ENCODE measurements at regions of chr1 and their contacts with region 1.

Region 1: GRCh38 chr1:154324669-154325582 is at the start of gene ATP8B2:
- DNase-seq: peak; percentile 90
- CTCF ChIP-seq: peak; percentile 82

Region 2: DNA sequence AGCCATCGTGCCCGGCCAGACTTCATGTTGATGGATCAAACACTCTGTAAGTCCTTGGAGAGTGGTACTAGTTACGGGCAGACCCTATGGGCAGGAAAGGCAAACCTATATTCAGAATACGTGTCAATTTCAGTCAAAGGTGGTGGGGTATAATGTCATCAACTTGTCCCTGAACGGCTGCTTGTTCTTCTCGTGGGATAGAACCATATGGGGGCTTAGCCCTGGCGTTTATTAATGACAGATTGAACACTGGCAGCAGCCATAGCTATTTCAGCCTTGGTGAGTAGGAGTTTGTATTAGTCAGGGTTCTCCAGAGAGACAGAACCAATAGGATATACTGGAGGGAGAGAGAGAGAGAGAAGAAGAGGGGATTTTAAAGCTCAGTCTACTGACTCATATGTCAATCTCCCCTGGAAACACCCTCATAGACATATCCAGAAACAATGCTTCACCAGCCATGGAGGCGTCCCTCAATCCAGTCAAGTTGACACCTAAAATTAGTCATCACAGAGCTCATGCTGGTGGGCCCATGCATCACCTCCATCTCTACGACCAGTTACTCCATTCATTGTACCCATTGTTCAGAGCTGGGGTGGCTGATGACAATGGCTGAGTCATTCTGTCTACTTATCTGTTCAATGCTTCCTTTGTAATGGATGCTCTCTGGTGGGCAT is 20.1 kb before region 1 on chr1:
- CTCF ChIA-PET with region 1: interaction called, 16 read pairs
- POLR2A ChIA-PET with region 1: no interaction called
- DNase-seq: no peak
- CTCF ChIP-seq: no peak

Region 3: GRCh38 chr1:154313066-154313356 is 11.9 kb before region 1 on chr1:
- CTCF ChIA-PET with region 1: interaction called, 31 read pairs
- POLR2A ChIA-PET with region 1: no interaction called
- DNase-seq: no peak
- CTCF ChIP-seq: no peak

Region 4: DNA sequence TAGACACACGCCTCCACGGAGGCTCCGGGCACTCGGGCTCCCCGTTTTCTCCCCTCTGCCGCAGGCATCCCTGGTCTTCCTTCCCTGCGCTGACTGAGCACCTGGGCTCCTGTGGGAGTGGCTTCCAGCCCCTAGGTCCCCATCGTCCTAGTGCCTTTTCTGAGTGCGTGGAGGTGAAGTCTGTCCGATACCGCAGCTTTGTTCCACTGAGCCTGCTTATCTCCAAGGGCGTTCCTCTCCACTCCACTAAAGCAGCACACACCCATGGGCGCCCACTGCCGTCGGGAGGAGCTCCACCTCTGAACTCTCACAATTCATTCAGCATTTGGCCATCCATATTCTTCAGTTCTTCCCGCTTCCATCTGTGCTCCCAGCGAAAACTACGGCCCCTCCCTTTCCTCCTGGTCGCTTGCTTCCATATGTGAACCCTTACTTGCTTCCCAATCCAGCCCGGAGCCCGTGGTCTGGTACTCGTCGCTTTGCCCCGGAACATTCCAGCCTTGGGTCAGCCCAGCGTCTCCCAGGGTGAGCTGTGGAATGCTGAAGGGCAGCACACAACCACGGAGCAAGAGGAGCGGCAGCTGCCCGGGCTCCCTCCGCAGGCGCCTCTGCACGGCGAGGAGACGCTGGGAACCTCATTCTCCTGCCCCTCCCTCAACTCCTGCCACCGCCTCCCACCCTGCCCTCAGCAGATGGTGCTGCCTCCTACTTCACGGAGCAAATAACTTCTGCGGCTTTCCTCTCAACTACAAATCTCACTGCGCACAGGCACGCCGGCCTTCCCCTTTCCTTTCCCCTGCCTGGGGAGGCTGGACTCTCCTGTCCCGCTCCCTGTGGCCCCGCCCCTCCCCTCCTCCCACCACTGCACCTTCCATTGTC is 27.9 kb after region 1 on chr1:
- CTCF ChIA-PET with region 1: interaction called, 211 read pairs
- POLR2A ChIA-PET with region 1: no interaction called
- DNase-seq: peak; percentile 60
- CTCF ChIP-seq: peak; percentile 22

Measured in GM10248 (cell line).